ENCODE measurements at regions of chr11 and their contacts with region 1.

Region 1: GRCh38 chr11:82867495-82868082 is 32.6 kb downstream of the PRCP start:
- DNase-seq: peak; percentile 62
- H3K4me3 ChIP-seq: no peak overlapping the region; a peak in 1 of 4 replicates
- H3K27ac ChIP-seq: no peak overlapping the region
- H3K4me1 ChIP-seq: peaks cover 0 to 7% of the 10 kb centered on the region in 2 experiments; a peak in 1 of 4 replicates
- H3K27me3 ChIP-seq: no peaks in the 10 kb centered on the region
- CTCF ChIP-seq: peak; percentile 78
- EP300 ChIP-seq: no peak
- RAD21 ChIP-seq: peak; percentile 82

Region 2: DNA sequence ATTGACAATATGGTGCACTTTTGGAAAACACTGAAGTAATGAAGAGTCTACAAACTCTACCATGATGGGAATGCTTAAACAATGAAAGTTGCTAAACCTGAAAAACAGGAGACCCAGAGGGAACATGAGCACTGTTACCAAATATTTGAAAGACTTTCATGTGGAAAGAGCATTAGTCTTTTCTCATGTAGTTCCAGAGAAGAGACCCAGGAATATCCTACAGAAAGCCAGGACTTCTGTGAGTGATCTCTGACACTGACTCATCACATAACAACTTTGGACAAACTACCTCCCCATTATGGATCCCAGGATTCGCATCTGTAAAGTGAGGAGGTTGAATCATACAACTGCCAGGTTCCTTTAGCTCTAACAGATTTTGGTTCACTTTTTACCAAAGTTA is 196.1 kb before region 1 on chr11:
- CTCF ChIA-PET with region 1: no interaction called
- POLR2A ChIA-PET with region 1: no interaction called
- DNase-seq: no peak
- H3K4me3 ChIP-seq: no peak overlapping the region
- H3K27ac ChIP-seq: no peak overlapping the region
- H3K4me1 ChIP-seq: no peaks in the 10 kb centered on the region
- H3K27me3 ChIP-seq: no peaks in the 10 kb centered on the region
- CTCF ChIP-seq: no peak
- EP300 ChIP-seq: no peak
- RAD21 ChIP-seq: no peak

Region 3: GRCh38 chr11:82718307-82718706 is 149.3 kb before region 1 on chr11:
- CTCF ChIA-PET with region 1: interaction called, 86 read pairs
- POLR2A ChIA-PET with region 1: interaction called, 3 read pairs
- DNase-seq: peak; percentile 54
- H3K4me3 ChIP-seq: no peak overlapping the region
- H3K27ac ChIP-seq: no peak overlapping the region
- H3K4me1 ChIP-seq: peaks cover 0 to 7% of the 10 kb centered on the region in 2 experiments; a peak in 1 of 4 replicates
- H3K27me3 ChIP-seq: no peaks in the 10 kb centered on the region
- CTCF ChIP-seq: peak; percentile 83
- EP300 ChIP-seq: no peak
- RAD21 ChIP-seq: peak; percentile 89

Region 4: GRCh38 chr11:82765466-82766034 is 102.0 kb before region 1 on chr11:
- CTCF ChIA-PET with region 1: no interaction called
- POLR2A ChIA-PET with region 1: no interaction called
- DNase-seq: no peak
- H3K4me3 ChIP-seq: no peak overlapping the region
- H3K27ac ChIP-seq: no peak overlapping the region
- H3K4me1 ChIP-seq: no peaks in the 10 kb centered on the region
- H3K27me3 ChIP-seq: no peaks in the 10 kb centered on the region
- CTCF ChIP-seq: no peak
- EP300 ChIP-seq: no peak
- RAD21 ChIP-seq: no peak

Region 5: DNA sequence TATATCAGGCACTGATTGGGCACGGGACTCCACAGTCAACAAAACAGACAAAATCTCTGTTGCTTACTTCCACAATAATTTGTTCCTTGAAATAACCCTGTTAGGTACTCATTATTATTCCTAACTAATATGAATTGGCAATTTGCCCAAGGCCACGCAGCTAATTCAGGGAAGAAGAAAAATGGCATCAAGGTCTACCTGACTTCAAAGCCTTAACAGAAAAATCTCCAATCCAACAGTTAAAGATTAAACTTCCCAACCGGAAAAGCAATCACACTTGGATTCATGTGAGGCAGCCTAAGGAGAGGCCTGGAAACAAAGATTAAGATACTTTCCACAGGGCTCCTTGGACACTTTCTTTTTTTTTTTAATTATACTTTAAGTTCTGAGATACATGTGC is 36.2 kb before region 1 on chr11:
- CTCF ChIA-PET with region 1: interaction called, 10 read pairs
- POLR2A ChIA-PET with region 1: no interaction called
- DNase-seq: no peak
- H3K4me3 ChIP-seq: no peak overlapping the region
- H3K27ac ChIP-seq: no peak overlapping the region
- H3K4me1 ChIP-seq: no peaks in the 10 kb centered on the region
- H3K27me3 ChIP-seq: no peaks in the 10 kb centered on the region
- CTCF ChIP-seq: no peak
- EP300 ChIP-seq: no peak
- RAD21 ChIP-seq: no peak

Region 6: GRCh38 chr11:82889133-82890001 is 21.8 kb after region 1 on chr11:
- CTCF ChIA-PET with region 1: interaction called, 43 read pairs
- POLR2A ChIA-PET with region 1: no interaction called
- DNase-seq: no peak
- H3K4me3 ChIP-seq: no peak overlapping the region
- H3K27ac ChIP-seq: no peak overlapping the region
- H3K4me1 ChIP-seq: peaks cover 0 to under 1% of the 10 kb centered on the region in 2 experiments; a peak in 2 of 4 replicates
- H3K27me3 ChIP-seq: no peaks in the 10 kb centered on the region
- CTCF ChIP-seq: no peak
- EP300 ChIP-seq: no peak
- RAD21 ChIP-seq: no peak

Region 7: GRCh38 chr11:82927254-82927880 is 59.8 kb after region 1 on chr11:
- CTCF ChIA-PET with region 1: interaction called, 23 read pairs
- POLR2A ChIA-PET with region 1: no interaction called
- DNase-seq: peak; percentile 54
- H3K4me3 ChIP-seq: no peak overlapping the region; a peak in 1 of 4 replicates
- H3K27ac ChIP-seq: no peak overlapping the region
- H3K4me1 ChIP-seq: peaks cover 7 to 12% of the 10 kb centered on the region in 2 experiments; a peak in 3 of 4 replicates
- H3K27me3 ChIP-seq: no peaks in the 10 kb centered on the region
- CTCF ChIP-seq: peak; percentile 92
- EP300 ChIP-seq: no peak
- RAD21 ChIP-seq: peak; percentile 64

Region 8: GRCh38 chr11:83132191-83132590 is 264.6 kb after region 1 on chr11:
- CTCF ChIA-PET with region 1: no interaction called
- POLR2A ChIA-PET with region 1: no interaction called
- DNase-seq: no peak
- H3K4me3 ChIP-seq: no peak overlapping the region
- H3K27ac ChIP-seq: no peak overlapping the region
- H3K4me1 ChIP-seq: no peaks in the 10 kb centered on the region
- H3K27me3 ChIP-seq: no peaks in the 10 kb centered on the region
- CTCF ChIP-seq: no peak
- EP300 ChIP-seq: no peak
- RAD21 ChIP-seq: no peak

Measured in SK-N-SH (cell line).